ENCODE measurements at regions of chr16 and their contacts with region 1.

Region 1: GRCh38 chr16:74998481-74999218 is at the start of gene ZNRF1:
- DNase-seq: peak; percentile 54 to 77 (median 69)
- H3K4me3 ChIP-seq: peak within 1 kb of the TSS; percentile 72 to 98 (median 91)
- H3K27ac ChIP-seq: peak within 1 kb of the TSS; percentile 49 to 92 (median 84)
- H3K27me3 ChIP-seq: no peaks in the 10 kb centered on the region
- CTCF ChIP-seq: peak; percentile 73 to 94 (median 85)
- total RNA-seq, gene ZNRF1: 23.1 to 64.5 (median 38.6) TPM

Region 2: GRCh38 chr16:74984535-74985296 is 13.9 kb before region 1 on chr16 and contains the start of gene WDR59:
- intact Hi-C with region 1: loop called in 1 of 2 experiments (anchors 2 kb)
- DNase-seq: peak; percentile 97 to 100 (median 99)
- H3K4me3 ChIP-seq: peak within 1 kb of the TSS; percentile 71 to 100 (median 98)
- H3K27ac ChIP-seq: peak within 1 kb of the TSS in 51 of 59 donors; percentile 38 to 88 (median 74)
- H3K27me3 ChIP-seq: no peaks in the 10 kb centered on the region
- CTCF ChIP-seq: peak in 15 of 56 donors; percentile 5 to 51 (median 22)
- total RNA-seq, gene WDR59: 77.6 to 183 (median 115) TPM

Region 3: GRCh38 chr16:75265845-75266701 is 267.4 kb after region 1 on chr16:
- intact Hi-C with region 1: no loop called
- DNase-seq: peak; percentile 55 to 86 (median 72)
- H3K4me3 ChIP-seq: peak overlapping the region; percentile 62 to 99 (median 94)
- H3K27ac ChIP-seq: peak overlapping the region; percentile 63 to 98 (median 94)
- H3K27me3 ChIP-seq: no peaks in the 10 kb centered on the region
- CTCF ChIP-seq: peak in 6 of 56 donors; percentile 6 to 14 (median 12)